Breast epithelium (tissue), 4 donors: ENCODE measurements at regions of chr19 and their contacts with region 1.

Region 1: DNA sequence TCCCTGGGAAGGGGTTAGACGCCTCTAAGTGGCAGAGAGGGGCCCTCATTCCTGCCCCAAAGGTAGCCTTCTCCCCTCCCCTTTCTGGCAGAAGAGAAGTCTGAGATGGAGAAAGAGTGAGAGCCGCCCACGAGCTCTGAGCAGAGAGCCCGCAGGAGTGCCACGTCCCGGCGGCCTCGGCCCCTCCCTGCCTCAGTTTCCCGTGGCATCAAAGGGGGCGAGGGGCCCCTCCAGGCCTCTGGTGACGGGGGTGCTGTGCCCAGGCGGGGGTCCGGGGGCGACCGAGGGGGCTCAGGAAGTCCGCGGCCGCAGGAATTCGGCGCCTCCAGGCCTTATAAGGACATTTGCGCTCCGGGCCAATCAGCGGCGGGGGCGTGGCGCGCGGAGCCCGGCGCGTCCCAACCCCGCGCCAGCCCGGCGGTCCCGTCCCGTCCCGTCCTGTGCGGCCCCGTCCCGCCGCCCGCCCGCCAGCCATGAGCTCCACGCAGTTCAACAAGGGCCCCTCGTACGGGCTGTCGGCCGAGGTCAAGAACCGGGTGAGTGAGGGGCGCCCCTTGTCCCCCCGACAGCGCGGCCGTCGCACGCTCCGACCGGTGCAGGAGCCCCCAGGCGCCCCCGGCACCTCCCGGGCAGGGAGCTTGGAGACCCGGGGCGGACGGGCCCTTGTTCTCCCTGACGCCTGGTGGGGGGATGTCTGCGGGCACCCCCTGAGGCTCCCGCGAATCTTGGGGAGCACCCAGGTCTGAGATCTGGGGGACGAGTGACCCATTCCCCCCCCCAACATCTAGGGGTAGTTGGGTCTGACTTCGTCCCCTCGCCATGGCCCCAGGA is at the start of gene CNN2:
- DNase-seq: peak; percentile 83 to 85
- H3K4me3 ChIP-seq: peak within 1 kb of the TSS; percentile 93 to 100 (median 98)
- H3K27ac ChIP-seq: peak within 1 kb of the TSS; percentile 98 to 99
- H3K4me1 ChIP-seq: peaks cover 0 to 5% of the 10 kb centered on the region in 2 donors
- H3K27me3 ChIP-seq: no peaks in the 10 kb centered on the region
- CTCF ChIP-seq: peak in 1 of 3 donors; percentile 8
- POLR2A ChIP-seq: peak; percentile 57
- total RNA-seq, gene CNN2: 70.4 to 74.1 (median 70.7) TPM

Region 2: GRCh38 chr19:1103708-1104310 is 77.4 kb after region 1 on chr19 and contains the start of gene GPX4:
- intact Hi-C with region 1: loop called (anchors 5 kb)
- DNase-seq: peak; percentile 99 to 100
- H3K4me3 ChIP-seq: peak within 1 kb of the TSS; percentile 86 to 92 (median 88)
- H3K27ac ChIP-seq: peak within 1 kb of the TSS; percentile 97
- H3K4me1 ChIP-seq: peaks cover 16 to 35% of the 10 kb centered on the region in 2 donors
- H3K27me3 ChIP-seq: no peaks in the 10 kb centered on the region
- CTCF ChIP-seq: no peak
- POLR2A ChIP-seq: peak; percentile 72
- total RNA-seq, gene GPX4: 357 to 1,796 (median 492) TPM

Region 3: DNA sequence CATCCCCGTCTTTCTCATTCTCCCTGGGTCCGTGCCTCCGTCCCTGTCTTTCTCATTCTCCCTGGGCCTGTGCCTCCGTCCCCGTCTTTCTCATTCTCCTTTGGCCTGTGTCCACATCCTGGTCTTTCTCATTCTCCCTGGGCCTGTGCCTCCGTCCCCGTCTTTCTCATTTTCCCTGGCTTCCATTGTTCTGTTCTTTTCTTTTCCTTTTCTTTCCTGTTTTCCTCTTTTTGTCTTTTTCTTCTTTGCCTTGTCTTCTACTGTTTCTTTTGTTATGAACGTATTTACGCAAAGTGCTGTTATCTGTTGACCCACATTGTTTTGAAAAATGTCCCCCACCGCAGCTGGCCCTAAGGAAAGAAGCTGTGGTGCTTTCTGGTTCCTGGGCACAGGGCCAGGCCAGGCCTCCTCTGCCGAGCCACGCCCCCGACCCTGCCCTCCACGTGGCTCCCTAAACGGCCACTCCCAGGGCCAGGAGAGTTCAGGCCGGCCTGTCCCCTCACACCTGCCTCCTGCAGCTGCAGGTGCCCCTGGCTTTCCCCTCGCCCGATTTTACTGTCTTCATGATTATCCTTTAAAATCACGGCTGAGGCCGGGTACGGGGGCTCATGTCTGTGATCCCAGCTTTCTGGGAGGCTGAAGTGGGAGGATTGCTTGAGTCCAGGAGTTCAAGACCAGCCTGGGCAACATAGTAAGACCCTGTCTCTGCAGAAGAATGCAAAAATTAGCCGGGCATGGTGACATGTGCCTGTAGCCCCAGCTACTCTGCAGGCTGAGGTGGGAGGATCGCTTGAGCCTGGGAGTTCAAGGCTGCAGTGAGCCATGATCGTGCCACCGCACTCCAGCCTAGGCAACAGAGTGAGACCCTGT is 1319.6 kb after region 1 on chr19:
- intact Hi-C with region 1: no loop called
- DNase-seq: no peak
- H3K4me3 ChIP-seq: no peak overlapping the region
- H3K27ac ChIP-seq: no peak overlapping the region
- H3K4me1 ChIP-seq: no peaks in the 10 kb centered on the region
- H3K27me3 ChIP-seq: no peaks in the 10 kb centered on the region
- CTCF ChIP-seq: no peak
- POLR2A ChIP-seq: no peak